GM13977 (cell line): ENCODE measurements at regions of chr11 and their contacts with region 1.

Region 1: DNA sequence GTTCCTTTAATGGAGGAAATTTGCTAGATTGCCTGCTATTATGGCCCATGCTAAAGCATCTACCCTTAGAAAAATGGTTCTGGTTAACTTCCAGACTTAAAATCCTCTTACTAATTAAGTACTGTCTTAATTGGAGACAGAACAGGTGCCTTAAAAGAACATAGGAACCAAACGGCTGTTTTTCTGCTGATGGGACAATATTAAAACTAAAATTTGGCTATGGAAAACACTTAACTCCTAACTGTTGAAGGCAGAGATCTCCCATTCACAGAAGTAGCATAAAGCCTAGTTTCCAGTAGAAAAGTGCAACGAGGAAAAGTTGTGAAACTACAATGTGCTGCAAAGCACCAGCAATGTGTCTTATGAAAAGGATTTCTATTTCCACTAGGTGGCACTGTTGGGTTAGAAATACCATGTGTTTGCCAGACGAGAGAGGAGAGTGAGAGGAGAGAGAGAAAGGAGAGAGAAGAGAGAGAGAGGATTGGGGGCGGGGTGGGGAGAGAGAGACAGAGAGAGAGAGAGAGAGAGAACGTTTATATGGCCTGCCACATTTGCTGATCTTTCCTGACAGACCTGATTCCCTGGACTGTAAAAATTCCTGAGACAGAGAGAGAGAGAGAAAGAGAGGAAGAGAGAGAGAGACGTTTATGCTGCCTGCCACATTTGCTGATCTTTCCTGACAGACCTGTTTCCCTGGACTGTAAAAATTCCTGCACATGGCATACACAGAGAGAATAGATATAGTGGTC is 51.5 kb downstream of the FAM181B start:
- DNase-seq: no peak
- CTCF ChIP-seq: peak; percentile 68

Region 2: GRCh38 chr11:82494988-82495432 is 187.2 kb before region 1 on chr11:
- in situ Hi-C with region 1: loop called (anchors 25 kb)
- DNase-seq: peak; percentile 30
- CTCF ChIP-seq: peak; percentile 33